Stomach (tissue), 19 donors: ENCODE measurements at regions of chr2 and their contacts with region 1.

Region 1: GRCh38 chr2:112683538-112684414 is 37.0 kb upstream of the NT5DC4 start:
- DNase-seq: peak in 1 of 2 donors; percentile 33
- H3K4me3 ChIP-seq: no peak overlapping the region
- H3K27ac ChIP-seq: no peak overlapping the region
- H3K4me1 ChIP-seq: peaks cover 0 to 4% (median 2%) of the 10 kb centered on the region in 4 donors
- H3K27me3 ChIP-seq: no peaks in the 10 kb centered on the region
- CTCF ChIP-seq: no peak
- EP300 ChIP-seq: no peak
- POLR2A ChIP-seq: no peak

Region 2: GRCh38 chr2:112634153-112634873 is 49.5 kb before region 1 on chr2:
- intact Hi-C with region 1: loop called (anchors 5 kb)
- DNase-seq: peak in 1 of 2 donors; percentile 30
- H3K4me3 ChIP-seq: no peak overlapping the region
- H3K27ac ChIP-seq: no peak overlapping the region
- H3K4me1 ChIP-seq: peaks cover 0 to 25% (median 12%) of the 10 kb centered on the region in 4 donors
- H3K27me3 ChIP-seq: peaks cover 0 to 16% (median 0%) of the 10 kb centered on the region in 3 donors
- CTCF ChIP-seq: no peak
- EP300 ChIP-seq: no peak
- POLR2A ChIP-seq: no peak